AG04449 (cell line): ENCODE measurements at regions of chr19 and their contacts with region 1.

Region 1: GRCh38 chr19:16315825-16316505 is 8.7 kb upstream of the KLF2 start:
- DNase-seq: peak; percentile 96
- H3K4me3 ChIP-seq: peak overlapping the region; percentile 15; the same call in 1 of the 2 replicates
- CTCF ChIP-seq: no peak

Region 2: DNA sequence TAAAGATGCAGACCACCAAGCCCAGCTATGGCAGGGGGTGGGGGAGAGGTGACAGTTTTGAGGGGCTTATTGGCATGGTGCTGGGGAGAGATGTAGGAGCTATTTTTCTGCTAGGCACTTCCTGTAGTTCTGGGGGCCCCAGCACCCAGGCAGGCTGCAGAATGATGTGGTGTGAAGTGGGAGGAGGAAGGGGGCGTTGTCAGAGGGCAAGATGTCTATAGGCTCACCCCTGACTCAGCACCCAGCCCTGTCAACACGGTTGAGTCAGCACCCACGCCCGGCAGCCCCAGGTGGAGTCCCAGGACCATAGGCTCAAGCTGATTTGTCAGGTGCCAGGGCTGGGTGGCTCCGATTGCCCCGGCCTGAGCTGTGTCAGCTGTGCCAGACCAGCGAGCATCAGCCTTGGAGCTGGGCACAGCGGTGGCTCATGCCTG is 14.4 kb after region 1 on chr19:
- CTCF ChIA-PET with region 1: interaction called, 4 read pairs
- POLR2A ChIA-PET with region 1: interaction called, 77 read pairs
- DNase-seq: no peak
- H3K4me3 ChIP-seq: no peak overlapping the region
- CTCF ChIP-seq: no peak

Region 3: DNA sequence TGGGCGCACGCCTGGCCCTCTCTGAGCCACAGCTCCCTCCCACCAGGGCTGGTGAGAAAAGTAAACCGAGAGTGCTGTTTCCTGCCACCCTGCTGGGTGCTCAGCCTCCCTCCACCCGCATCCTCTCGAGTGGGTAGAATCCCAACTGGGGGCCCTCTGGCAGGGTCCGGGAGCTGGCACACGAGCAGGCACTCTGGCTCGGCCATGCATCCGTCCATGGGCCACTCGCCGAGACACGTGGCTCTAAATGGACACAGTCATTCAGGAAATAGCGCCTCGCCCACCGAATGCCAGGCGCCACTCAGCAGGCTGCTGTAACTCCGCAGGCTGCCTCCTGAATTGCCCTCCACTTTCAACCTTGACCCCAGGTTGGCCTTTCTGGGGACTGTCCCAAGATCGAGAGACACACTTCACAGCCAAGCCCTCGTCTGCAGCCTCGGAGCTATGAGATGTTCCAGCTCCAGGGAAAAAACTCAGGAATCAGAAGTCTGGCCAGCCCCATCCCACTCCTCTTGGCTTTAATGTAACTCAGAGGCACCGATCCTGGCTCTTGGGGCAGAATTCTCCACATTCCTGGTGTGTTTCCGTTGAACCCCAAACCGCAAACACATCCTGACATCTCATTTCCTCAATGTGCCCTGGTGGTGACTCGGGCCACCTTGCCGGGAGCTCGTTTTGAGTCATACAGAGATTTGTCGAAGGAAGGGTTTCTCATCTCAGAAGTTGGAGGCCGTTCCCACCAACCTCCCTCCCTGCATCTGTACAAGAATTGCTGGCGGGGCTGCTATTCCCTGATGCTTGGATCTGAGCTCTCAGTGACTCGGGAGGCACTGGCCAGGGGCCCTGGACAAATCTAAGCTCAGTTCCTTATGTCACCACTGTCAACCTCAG is 22.8 kb after region 1 on chr19:
- CTCF ChIA-PET with region 1: interaction called, 3 read pairs
- POLR2A ChIA-PET with region 1: interaction called, 11 read pairs
- DNase-seq: no peak
- H3K4me3 ChIP-seq: no peak overlapping the region; the same call in 1 of the 2 replicates
- CTCF ChIP-seq: peak; percentile 11

Region 4: GRCh38 chr19:16355293-16356043 is 39.5 kb after region 1 on chr19:
- CTCF ChIA-PET with region 1: no interaction called
- POLR2A ChIA-PET with region 1: no interaction called
- DNase-seq: no peak
- H3K4me3 ChIP-seq: no peak overlapping the region
- CTCF ChIP-seq: no peak